ENCODE measurements at regions of chr17 and their contacts with region 1.

Region 1: DNA sequence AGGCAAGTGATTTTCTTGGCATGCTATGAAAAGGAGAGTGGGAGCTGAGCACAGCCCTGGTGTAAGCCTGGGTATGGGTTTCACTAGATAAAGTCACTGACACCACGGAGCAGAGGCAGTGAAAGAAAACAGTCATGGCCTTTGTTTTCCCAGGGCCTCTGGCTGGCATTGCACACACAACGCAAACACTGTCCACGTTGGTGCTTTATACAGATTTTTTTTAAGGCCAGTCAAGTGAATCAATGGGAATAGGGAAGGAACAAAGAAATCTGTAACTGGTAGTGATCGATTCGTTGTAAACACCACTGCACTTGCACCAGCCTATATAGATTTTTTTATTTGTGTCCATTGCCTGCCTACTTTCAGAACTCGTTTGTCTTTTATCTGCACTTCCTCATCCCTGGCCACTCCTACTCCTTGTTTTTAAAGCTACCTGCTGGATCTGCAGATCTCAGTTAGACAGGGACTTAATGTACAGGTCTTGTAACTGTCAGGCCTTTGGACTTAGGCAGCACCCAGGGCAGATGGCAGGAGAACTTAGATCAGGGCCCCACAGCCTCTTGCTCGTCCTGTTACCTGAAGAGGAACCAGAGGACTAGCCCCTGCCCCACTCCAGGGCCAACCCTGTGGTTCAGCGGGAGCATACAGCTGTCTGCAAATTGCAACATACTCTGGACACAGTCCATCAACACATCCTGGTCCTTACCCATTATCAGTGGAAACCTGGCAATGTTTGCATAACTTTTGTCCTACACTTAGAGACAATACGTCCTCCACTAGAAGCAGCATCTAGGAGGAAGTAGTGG is 10.6 kb upstream of the TMIGD1 start:
- DNase-seq: no peak
- H3K4me3 Mint-ChIP-seq: no peak overlapping the region
- H3K27ac Mint-ChIP-seq: no peak overlapping the region
- H3K4me1 Mint-ChIP-seq: peaks cover 18% of the 10 kb centered on the region
- H3K27me3 Mint-ChIP-seq: no peaks in the 10 kb centered on the region

Region 2: DNA sequence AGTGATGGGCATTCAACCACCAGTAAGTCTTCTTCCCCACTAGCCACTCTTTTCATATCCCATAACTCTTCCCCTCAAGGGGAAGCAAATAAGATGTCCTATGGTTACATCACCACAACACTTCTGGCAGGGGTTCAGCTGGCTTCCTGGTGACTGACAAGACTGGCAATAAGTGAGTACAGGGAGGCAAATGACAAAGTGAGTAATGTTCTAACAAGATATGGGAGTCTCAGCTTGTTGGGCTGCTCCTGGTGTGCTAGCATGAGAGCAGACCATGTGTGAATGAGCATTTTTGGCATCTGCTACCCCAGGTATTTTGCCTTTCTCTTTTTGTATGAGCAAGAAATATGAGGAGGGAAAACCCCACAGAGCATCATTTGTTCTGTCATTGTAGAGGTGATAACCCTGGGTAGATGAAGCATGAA is 20.6 kb before region 1 on chr17:
- CTCF ChIA-PET with region 1: interaction called, 16 read pairs
- POLR2A ChIA-PET with region 1: no interaction called
- intact Hi-C with region 1: no loop called
- DNase-seq: peak; percentile 70
- H3K4me3 Mint-ChIP-seq: no peak overlapping the region
- H3K27ac Mint-ChIP-seq: peak overlapping the region; percentile 72
- H3K4me1 Mint-ChIP-seq: peaks cover 34% of the 10 kb centered on the region
- H3K27me3 Mint-ChIP-seq: no peaks in the 10 kb centered on the region

Region 3: DNA sequence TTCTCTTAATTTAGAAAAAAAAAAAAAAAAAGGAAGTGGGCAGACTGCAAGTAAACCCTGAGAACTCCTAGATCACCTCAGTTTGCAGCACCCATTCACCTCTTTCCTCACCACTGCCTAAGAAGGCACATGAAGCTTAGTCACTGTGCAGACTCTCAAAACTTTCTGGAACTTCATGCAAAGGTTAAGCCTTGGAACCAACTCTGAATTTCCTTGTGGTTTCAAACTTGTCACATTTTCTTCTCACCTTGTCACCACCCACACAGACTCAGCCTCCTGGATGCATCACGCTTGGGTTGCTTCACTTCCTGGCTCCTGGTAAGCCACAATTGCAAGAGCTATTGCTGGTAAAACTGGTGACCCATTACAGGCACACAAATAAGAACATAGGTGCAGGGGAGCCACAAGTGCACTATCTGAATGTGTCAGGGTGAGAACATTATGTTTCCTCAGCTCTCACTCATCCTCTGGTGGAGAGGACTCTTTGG is 19.3 kb after region 1 on chr17:
- CTCF ChIA-PET with region 1: interaction called, 17 read pairs
- POLR2A ChIA-PET with region 1: interaction called, 8 read pairs
- intact Hi-C with region 1: loop called (anchors 2 kb)
- DNase-seq: peak; percentile 94
- H3K4me3 Mint-ChIP-seq: peak overlapping the region; percentile 13
- H3K27ac Mint-ChIP-seq: peak overlapping the region; percentile 78
- H3K4me1 Mint-ChIP-seq: peaks cover 28% of the 10 kb centered on the region
- H3K27me3 Mint-ChIP-seq: no peaks in the 10 kb centered on the region

Region 4: GRCh38 chr17:30378824-30379302 is 34.4 kb after region 1 on chr17 and contains the start of gene CPD:
- CTCF ChIA-PET with region 1: interaction called, 15 read pairs
- POLR2A ChIA-PET with region 1: interaction called, 3 read pairs
- intact Hi-C with region 1: no loop called
- DNase-seq: peak; percentile 98
- H3K4me3 Mint-ChIP-seq: peak within 1 kb of the TSS; percentile 82
- H3K27ac Mint-ChIP-seq: peak within 1 kb of the TSS; percentile 75
- H3K4me1 Mint-ChIP-seq: peaks cover 65% of the 10 kb centered on the region
- H3K27me3 Mint-ChIP-seq: no peaks in the 10 kb centered on the region
- total RNA-seq, gene CPD: 34.1 to 34.3 TPM

Region 5: DNA sequence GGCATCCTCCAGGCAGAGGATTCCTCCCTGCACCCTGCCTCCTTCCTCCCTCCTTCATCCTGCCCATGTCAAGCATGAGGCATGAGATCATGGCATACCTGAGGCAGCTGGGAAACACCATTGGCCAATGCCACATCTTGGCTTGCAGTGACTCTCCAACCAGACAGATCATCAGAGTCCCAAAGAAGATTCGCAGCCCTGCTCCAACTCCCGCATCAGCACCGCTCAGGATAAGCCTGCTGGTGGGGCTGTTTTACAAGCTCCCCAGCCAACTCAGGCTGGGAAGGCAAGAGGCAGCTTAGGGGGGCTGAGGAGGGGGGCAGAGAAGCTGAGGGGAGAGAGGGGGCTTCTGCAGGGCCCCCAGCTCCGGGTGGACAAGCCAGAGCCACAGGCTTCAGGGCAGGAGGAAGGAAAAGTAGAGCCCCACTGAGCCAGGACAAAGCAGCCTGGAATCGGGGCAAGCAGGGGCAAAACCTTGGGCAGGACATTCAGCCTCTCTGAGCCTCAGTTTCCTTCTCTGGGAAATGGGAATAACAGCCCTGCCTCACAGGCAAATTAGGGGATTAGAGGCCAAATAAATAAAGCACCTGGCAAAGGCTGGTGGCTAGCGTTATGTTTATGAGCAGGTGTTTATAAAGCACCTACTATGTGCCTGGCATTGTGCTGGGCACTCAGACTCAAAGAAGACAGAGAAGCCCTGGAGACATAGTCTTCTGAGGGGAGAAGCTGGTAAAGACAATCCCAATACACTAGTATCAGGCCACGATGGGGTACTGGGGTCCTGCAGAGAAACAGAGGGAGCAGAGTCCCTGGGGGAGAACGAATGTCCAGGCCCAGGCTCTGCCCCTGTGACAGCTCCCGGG is 220.8 kb after region 1 on chr17:
- CTCF ChIA-PET with region 1: no interaction called
- POLR2A ChIA-PET with region 1: no interaction called
- intact Hi-C with region 1: no loop called
- DNase-seq: no peak
- H3K4me3 Mint-ChIP-seq: no peak overlapping the region
- H3K27ac Mint-ChIP-seq: no peak overlapping the region
- H3K4me1 Mint-ChIP-seq: no peaks in the 10 kb centered on the region
- H3K27me3 Mint-ChIP-seq: no peaks in the 10 kb centered on the region

Region 6: GRCh38 chr17:30605523-30605922 is 261.0 kb after region 1 on chr17:
- CTCF ChIA-PET with region 1: no interaction called
- POLR2A ChIA-PET with region 1: no interaction called
- intact Hi-C with region 1: no loop called
- DNase-seq: no peak
- H3K4me3 Mint-ChIP-seq: no peak overlapping the region
- H3K27ac Mint-ChIP-seq: no peak overlapping the region
- H3K4me1 Mint-ChIP-seq: peaks cover 9% of the 10 kb centered on the region
- H3K27me3 Mint-ChIP-seq: no peaks in the 10 kb centered on the region

Region 7: DNA sequence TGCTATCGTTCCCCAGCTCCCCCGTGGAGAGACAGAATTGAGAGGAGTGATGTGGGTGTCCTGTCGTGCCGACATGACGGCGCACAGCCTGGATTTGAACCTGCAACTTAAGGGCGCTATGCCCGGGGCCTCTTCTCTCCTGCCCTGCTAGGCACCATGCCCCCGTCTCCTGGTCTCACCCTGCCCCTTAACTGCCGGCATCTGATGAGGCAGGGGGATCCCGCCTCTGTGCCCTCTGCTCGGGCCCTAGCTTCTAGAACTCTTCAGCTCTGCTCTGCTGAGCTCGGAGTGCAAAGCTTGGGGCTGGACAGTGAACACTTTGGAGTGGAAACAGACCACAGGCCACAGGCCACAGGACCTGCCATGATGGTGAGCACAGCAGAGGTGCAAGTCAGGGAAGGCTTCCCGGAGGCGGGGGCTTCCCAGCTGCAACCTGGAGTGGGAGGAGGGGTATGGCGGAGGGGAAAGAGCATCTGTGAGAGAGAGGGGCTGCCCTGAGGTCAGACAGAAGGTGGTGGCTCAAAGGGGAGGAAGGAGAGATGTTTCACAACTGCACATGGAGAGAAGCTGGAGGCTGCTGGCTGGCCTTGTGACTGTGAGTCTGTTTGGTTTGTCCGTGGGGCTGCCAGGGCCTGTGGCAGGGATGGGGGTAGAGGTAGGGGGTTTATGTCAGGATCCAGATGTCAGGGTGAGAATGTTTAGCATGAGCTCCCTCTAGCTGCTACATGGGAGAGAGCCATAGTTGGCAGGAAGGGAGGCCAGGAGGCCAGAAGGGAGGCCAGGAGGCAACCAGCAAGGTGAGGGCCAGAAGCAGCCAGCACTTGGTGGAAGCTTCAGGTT is 372.2 kb after region 1 on chr17:
- CTCF ChIA-PET with region 1: no interaction called
- POLR2A ChIA-PET with region 1: no interaction called
- intact Hi-C with region 1: loop called (anchors 1 kb)
- DNase-seq: no peak
- H3K4me3 Mint-ChIP-seq: no peak overlapping the region
- H3K27ac Mint-ChIP-seq: no peak overlapping the region
- H3K4me1 Mint-ChIP-seq: peaks cover 6% of the 10 kb centered on the region
- H3K27me3 Mint-ChIP-seq: no peaks in the 10 kb centered on the region